BJ (cell line): ENCODE measurements at regions of chr4 and their contacts with region 1.

Region 1: DNA sequence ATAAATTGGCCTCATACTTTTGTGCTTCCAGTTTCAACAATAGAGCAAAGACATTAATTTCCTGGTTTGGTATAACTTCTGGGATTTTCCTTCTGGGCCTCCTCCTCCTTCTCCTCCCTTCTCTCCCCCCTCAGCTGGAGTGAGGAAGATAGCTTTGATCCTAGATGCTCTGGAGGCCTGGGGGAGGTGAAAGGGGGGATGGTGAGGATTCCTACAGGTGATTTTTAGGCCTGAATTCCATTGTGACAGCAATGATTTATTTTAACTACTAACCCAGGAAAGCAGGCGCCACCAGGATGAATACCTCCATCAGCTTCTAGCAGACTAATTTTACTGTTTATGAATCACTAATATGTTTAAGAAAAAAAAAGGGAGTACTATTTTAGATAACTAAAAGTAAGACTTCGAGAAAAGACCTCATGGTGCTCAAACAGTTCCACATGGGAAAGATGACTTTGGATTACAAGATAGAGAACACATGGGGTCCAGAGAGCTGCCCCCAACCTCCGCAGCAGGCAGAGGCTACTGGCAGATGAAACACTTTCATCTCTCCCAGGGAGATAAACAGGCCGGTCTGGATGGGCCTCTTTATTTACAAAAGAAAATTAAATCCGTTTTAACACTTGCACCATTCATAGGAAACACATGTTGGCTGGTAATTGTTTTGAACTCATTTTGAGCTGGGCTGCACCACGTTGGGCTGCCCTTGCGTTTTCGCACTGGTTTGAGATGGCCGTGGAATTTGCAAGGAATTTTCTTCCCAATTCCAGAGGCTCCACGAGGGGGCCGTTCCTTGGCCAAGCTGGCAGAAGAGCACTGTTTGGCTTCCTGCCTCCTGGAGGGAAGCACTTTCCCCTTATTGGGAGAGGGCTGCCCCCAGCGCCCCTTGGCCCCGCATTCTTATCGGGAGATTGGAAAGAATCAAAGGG is 125.1 kb upstream of the STX18 start:
- DNase-seq: peak; percentile 41
- H3K4me3 ChIP-seq: no peak overlapping the region
- H3K27me3 ChIP-seq: no peaks in the 10 kb centered on the region
- CTCF ChIP-seq: peak; percentile 41; the same call in 1 of the 2 replicates

Region 2: GRCh38 chr4:4643306-4643705 is 23.7 kb before region 1 on chr4:
- CTCF ChIA-PET with region 1: no interaction called
- POLR2A ChIA-PET with region 1: no interaction called
- DNase-seq: no peak
- H3K4me3 ChIP-seq: no peak overlapping the region
- H3K27me3 ChIP-seq: no peaks in the 10 kb centered on the region
- CTCF ChIP-seq: no peak

Region 3: DNA sequence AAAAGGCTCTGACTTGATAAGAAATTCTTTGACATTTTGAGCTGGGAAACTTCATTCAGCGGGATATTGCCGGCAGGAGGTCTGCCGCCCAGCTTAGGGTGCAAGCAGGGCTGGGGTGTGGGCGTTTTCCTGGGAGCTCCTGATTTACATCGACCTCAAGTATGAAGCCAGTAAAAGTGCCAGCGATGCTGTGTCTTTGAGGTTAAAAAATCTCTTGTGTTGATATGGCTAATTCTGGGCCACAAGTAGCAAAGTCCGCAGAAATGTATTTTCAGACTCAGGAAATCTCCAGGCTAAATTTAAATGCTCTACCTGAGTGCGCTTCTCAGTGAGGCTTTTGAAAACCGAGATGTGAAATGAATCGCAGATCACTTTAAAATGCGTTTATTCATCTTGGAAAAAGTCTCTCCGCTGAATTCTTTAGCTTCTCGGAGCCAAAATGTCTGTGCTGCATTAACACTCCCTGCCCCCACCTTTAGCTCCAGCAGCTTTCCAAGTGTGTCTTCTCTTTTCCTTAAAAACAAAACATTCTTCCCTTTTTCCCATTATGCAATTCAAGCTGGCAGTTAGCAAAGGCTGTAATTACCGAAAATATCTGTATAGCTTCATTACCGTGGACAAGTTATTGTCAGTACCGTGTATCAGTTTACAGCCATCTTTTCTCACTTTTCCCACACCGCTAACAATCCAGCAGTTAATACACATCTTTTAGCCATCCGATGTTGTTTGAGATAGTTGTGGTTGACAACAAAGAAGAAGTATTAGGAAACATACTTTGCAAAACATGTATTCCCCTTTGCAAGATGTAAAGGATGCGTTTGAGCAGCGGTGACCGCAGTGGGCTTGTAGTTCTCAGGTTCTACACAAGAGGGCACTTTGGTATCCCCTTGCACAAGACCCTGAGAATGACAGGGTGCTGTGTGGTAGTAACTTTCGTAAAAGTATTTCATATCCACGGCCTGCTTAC is 10.9 kb after region 1 on chr4:
- CTCF ChIA-PET with region 1: interaction called, 17 read pairs
- POLR2A ChIA-PET with region 1: no interaction called
- DNase-seq: peak; percentile 41
- H3K4me3 ChIP-seq: peak overlapping the region; percentile 5; the same call in 1 of the 2 replicates
- H3K27me3 ChIP-seq: no peaks in the 10 kb centered on the region
- CTCF ChIP-seq: peak; percentile 87